PC-9 (cell line): ENCODE measurements at regions of chr12 and their contacts with region 1.

Region 1: GRCh38 chr12:62259993-62260732 is at the start of gene USP15:
- DNase-seq: peak; percentile 83 to 96
- H3K4me3 ChIP-seq: peak within 1 kb of the TSS; percentile 100
- H3K27ac ChIP-seq: peak within 1 kb of the TSS; percentile 70
- H3K4me1 ChIP-seq: peaks cover 28% of the 10 kb centered on the region
- H3K27me3 ChIP-seq: no peaks in the 10 kb centered on the region
- CTCF ChIP-seq: peak; percentile 57
- total RNA-seq, gene USP15: 25.0 and 25.8 TPM in 2 replicates

Region 2: DNA sequence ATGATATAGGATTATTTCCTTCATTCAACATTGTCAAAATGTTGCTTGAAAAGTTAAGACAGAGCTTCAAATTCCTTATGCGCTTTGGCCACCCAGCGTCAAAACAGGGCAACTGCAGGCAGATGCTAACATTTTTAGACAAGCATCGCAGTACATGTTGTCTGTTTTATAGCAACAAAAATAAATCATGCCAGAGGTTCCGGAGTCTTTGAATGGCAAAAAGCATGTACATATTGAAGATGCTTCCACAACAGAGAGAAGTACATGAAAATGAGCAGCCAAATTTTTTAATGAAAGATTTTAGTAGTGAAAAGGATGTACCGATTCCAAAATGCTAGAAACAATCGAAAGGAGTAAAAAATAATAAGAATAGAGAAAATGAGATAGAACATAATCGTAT is 49.7 kb before region 1 on chr12:
- CTCF ChIA-PET with region 1: no interaction called
- POLR2A ChIA-PET with region 1: no interaction called
- intact Hi-C with region 1: loop called (anchors 2 kb)
- DNase-seq: peak in 1 of 2 experiments; percentile 17
- H3K4me3 ChIP-seq: no peak overlapping the region
- H3K27ac ChIP-seq: no peak overlapping the region
- H3K4me1 ChIP-seq: peaks cover 22% of the 10 kb centered on the region
- H3K27me3 ChIP-seq: no peaks in the 10 kb centered on the region
- CTCF ChIP-seq: peak; percentile 92

Region 3: DNA sequence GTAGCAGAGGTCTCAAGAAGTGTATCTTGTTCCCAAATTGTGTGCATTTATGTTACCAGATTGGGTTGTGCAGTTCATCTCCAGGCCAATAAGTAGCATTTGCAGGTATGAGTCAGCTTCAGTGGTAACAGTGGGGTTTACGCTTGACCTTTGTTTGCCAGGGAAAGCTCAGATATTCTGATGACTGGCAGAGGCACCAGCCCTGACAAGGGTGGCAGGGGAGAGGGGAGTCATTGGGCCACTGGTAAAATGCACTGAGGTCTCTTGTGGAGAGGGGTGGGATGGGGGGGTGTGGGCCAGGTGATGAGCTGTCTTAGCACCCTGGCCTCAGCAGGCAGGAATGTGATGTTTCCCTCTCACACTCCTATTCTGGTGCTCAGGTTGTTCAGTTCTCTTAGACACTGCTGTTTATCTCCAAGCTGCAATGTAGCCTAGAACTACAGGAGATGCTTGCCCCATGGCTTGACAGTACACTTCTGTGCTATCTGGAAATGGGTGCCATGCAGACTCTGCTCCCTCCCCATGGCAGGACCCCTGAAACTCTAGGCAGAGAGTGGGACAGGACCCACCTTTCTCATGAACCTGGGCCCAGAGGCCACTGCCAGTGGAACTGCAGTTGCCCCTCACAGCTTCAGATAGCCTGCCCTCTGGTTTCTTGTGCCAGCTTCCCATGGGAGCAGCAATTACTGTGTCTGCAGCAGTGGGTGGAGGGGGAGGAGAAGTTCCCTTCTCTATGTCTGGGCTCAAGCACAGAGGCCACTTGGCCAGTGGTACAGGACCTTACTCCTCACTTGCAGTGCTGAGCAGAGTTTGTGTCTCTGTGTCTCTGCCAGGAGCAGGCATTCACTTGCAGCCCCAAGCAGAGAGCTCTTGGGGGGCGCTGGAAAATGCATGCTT is 31.9 kb after region 1 on chr12:
- CTCF ChIA-PET with region 1: no interaction called
- POLR2A ChIA-PET with region 1: no interaction called
- intact Hi-C with region 1: no loop called
- DNase-seq: no peak
- H3K4me3 ChIP-seq: no peak overlapping the region
- H3K27ac ChIP-seq: no peak overlapping the region
- H3K4me1 ChIP-seq: no peaks in the 10 kb centered on the region; the same call in 1 of the 2 replicates
- H3K27me3 ChIP-seq: no peaks in the 10 kb centered on the region
- CTCF ChIP-seq: no peak

Region 4: GRCh38 chr12:62466594-62467491 is 206.7 kb after region 1 on chr12 and contains the start of gene MON2:
- CTCF ChIA-PET with region 1: no interaction called
- POLR2A ChIA-PET with region 1: interaction called, 3 read pairs
- intact Hi-C with region 1: loop called (anchors 10 kb)
- DNase-seq: peak; percentile 79 to 83
- H3K4me3 ChIP-seq: peak within 1 kb of the TSS; percentile 81
- H3K27ac ChIP-seq: peak within 1 kb of the TSS; percentile 57
- H3K4me1 ChIP-seq: peaks cover 18% of the 10 kb centered on the region
- H3K27me3 ChIP-seq: no peaks in the 10 kb centered on the region
- CTCF ChIP-seq: no peak
- total RNA-seq, gene MON2: 32.8 and 42.1 TPM in 2 replicates

Region 5: DNA sequence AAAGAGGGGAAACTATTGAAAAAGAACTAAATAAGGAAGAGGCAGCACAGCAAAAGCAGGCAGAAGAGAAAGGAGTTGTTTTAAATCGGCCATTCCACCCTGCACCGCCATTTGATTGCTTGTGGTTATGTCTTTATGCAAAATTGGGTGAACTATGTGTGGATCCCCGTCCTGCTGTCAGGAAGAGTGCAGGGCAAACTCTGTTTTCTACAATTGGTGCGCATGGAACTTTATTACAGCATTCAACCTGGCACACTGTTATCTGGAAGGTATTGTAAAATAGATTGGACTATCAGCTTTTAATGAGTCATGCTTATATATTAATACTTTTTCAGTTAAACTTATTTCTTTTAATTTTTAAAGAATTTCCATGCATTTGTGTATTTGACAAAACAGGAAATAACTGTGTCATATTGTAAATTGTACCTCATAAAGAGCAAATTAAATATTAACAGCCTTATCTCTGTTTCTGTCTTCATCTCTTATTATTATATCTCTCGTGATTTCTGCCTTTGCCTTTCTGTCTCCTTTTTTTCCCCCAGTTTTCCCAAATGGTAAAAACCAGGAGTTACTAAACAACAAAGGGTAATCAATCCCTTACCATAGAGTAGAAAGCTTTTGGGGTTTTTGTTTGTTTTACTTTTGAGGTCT is 292.9 kb after region 1 on chr12:
- CTCF ChIA-PET with region 1: interaction called, 15 read pairs
- POLR2A ChIA-PET with region 1: no interaction called
- intact Hi-C with region 1: no loop called
- DNase-seq: no peak
- H3K4me3 ChIP-seq: no peak overlapping the region
- H3K27ac ChIP-seq: no peak overlapping the region
- H3K4me1 ChIP-seq: no peaks in the 10 kb centered on the region
- H3K27me3 ChIP-seq: no peaks in the 10 kb centered on the region
- CTCF ChIP-seq: no peak